HCT116 (cell line): ENCODE measurements at regions of chr11 and their contacts with region 1.

Region 1: DNA sequence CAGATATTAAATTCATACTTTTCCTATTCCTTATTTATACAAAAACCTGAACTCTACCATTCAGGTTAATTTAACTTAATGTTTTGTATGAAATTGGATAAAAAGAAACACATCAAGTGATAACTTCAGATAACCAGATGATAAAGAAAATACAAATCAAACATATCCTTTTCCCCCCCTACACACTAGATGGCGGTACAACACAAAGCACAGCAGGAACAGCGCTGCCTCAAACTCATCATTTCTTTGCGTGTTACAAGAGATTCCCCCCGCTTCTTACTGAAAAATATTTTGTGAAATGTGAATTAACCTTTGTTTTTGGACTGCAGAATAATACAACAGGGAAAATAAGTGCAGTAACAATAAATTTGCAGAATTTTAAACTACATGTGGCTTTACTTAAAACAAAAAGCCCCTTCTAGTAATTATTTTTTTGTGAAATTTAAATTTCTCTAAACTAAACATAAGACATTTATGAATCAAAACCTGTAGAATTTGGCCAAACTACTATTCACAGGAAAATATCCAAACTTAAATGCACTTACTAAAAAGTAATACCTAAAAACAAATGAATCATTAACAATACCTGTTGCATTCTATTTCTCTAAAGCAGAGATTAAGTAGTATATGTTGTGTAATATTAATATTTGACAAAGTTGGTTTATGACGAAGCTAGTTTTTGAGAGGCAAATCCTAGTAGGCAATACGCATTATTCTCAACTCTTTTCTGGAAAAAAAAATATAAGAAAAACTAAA is 74.4 kb downstream of the ARHGAP32 start:
- DNase-seq: peak; percentile 63
- ATAC-seq: peak; percentile 67; the same call in 1 of the 2 replicates
- H3K4me3 ChIP-seq: no peak overlapping the region
- H3K27ac ChIP-seq: no peak overlapping the region
- H3K4me1 ChIP-seq: peaks cover 5 to 12% of the 10 kb centered on the region in 2 experiments; a peak in 3 of 4 replicates
- H3K27me3 ChIP-seq: no peaks in the 10 kb centered on the region
- CTCF ChIP-seq: peak; percentile 71 to 95 (median 92)
- POLR2A ChIP-seq: no peak
- RAD21 ChIP-seq: peak; percentile 97

Region 2: DNA sequence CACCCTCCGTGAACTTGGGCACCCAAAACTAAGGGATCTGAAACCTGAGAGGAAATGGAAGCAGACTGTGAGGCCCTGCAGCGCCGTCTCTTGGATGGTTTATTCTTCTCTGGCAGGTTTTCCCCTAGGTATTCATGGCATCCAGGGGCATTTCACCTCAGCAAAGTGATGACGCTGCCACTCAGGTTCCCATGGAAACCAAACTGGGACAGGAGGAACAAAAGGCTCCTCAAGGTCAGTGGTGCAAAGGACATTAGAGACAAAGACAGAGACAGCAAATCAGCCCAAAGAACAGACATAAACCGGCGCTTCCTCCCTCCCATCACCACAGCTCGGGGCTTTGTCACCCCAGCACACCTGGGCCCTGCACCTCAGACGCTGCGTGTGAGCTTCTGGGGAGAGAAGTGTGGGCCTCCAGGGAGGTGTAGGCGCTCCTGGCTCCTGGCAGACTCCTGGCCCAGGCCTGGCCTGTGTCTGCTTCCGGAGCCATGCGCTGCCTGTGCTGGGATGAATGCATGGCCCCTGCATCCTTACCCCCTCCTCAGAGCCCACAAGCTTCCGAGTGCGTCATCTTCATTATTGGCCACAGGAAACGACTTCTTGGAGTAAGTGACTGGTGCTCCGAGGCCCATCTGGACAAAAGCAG is 181.0 kb before region 1 on chr11:
- CTCF ChIA-PET with region 1: no interaction called
- POLR2A ChIA-PET with region 1: no interaction called
- RAD21 ChIA-PET with region 1: no interaction called
- intact Hi-C with region 1: no loop called
- DNase-seq: no peak
- ATAC-seq: no peak
- H3K4me3 ChIP-seq: no peak overlapping the region
- H3K27ac ChIP-seq: no peak overlapping the region
- H3K4me1 ChIP-seq: no peaks in the 10 kb centered on the region
- H3K27me3 ChIP-seq: no peaks in the 10 kb centered on the region
- CTCF ChIP-seq: no peak
- POLR2A ChIP-seq: no peak
- RAD21 ChIP-seq: no peak

Region 3: DNA sequence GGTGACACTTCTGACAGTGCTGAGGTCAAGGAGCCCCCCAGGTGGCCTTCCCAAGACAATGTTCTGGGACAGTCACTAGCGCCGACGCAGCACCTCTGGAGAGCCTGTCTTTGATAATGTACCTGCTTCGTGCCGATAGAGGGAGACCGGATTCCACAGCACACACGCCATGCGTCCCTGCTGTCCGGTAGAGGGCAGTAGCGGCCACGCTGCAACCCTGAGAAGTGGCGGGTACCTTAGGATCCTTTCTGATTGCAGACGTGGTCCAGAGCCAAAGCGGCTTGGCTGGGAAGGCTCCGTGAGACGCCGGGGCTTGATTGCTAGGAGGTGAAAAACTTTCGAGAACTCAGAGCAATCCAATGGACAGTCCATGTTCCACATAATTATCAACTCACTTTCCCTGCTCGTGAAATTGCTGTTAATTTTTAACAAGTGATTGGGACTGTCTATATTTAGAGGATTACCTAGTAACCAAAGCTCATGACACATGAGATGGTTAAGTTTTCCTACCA is 246.4 kb after region 1 on chr11:
- CTCF ChIA-PET with region 1: no interaction called
- POLR2A ChIA-PET with region 1: no interaction called
- RAD21 ChIA-PET with region 1: no interaction called
- intact Hi-C with region 1: loop called (anchors 1 kb)
- DNase-seq: peak; percentile 85
- ATAC-seq: peak; percentile 99
- H3K4me3 ChIP-seq: no peak overlapping the region
- H3K27ac ChIP-seq: no peak overlapping the region
- H3K4me1 ChIP-seq: peaks cover 0 to 20% of the 10 kb centered on the region in 2 experiments; a peak in 2 of 4 replicates
- H3K27me3 ChIP-seq: peaks cover 32% of the 10 kb centered on the region
- CTCF ChIP-seq: peak; percentile 100
- POLR2A ChIP-seq: no peak
- RAD21 ChIP-seq: peak; percentile 99

Region 4: DNA sequence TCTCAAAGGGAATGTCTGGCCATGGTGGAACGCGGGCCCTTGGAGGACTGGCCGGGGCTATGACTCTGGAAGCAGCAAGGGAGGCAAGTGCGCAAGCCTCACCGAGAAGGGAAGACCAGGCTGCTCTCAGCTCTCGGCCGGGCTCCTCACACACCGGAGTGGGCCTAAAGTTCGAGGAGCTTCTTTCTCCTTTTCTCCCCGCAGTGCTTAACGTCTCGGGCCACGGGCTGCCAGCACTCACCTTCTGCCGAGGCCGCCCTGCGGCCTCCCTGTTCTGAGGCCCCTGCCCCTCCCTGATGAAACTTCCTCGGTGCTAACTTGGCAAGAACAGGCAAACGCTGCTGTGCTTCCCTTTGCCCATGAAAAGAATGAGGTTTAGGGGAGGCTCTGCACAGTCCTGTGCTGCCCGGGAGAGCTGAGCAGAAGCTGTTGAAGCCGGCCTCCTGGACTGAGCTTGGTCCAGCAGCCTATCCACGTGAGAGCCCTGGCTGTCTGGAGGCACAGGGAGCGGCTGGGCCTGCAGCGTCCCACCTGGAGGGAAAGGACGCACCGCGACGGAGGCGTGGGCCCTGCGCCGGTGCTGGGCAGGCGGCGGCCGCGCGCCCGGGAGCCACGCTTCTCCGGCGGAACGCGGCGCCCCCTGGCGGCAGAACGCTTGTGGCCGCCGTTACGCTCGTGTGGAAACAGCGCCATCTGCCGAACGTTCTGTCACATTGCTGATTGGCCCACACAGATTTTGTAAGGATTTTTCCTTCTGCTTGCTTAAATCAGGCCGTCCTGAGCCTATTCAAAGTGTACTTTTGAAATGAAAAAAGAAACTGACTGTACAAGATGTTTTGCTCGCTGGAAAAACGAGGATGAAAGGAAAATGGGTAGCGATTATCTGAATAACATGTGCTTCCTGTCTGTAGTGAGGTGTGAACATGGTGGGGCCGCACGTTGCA is 632.8 kb after region 1 on chr11:
- CTCF ChIA-PET with region 1: no interaction called
- POLR2A ChIA-PET with region 1: no interaction called
- RAD21 ChIA-PET with region 1: no interaction called
- intact Hi-C with region 1: loop called (anchors 1 kb)
- DNase-seq: peak; percentile 74
- ATAC-seq: peak; percentile 98
- H3K4me3 ChIP-seq: no peak overlapping the region
- H3K27ac ChIP-seq: no peak overlapping the region
- H3K4me1 ChIP-seq: peaks cover 0 to 5% of the 10 kb centered on the region in 2 experiments; a peak in 2 of 4 replicates
- H3K27me3 ChIP-seq: no peaks in the 10 kb centered on the region
- CTCF ChIP-seq: peak; percentile 75 to 99 (median 91)
- POLR2A ChIP-seq: no peak
- RAD21 ChIP-seq: peak; percentile 97